ENCODE measurements at regions of chr22 and their contacts with region 1.

Region 1: DNA sequence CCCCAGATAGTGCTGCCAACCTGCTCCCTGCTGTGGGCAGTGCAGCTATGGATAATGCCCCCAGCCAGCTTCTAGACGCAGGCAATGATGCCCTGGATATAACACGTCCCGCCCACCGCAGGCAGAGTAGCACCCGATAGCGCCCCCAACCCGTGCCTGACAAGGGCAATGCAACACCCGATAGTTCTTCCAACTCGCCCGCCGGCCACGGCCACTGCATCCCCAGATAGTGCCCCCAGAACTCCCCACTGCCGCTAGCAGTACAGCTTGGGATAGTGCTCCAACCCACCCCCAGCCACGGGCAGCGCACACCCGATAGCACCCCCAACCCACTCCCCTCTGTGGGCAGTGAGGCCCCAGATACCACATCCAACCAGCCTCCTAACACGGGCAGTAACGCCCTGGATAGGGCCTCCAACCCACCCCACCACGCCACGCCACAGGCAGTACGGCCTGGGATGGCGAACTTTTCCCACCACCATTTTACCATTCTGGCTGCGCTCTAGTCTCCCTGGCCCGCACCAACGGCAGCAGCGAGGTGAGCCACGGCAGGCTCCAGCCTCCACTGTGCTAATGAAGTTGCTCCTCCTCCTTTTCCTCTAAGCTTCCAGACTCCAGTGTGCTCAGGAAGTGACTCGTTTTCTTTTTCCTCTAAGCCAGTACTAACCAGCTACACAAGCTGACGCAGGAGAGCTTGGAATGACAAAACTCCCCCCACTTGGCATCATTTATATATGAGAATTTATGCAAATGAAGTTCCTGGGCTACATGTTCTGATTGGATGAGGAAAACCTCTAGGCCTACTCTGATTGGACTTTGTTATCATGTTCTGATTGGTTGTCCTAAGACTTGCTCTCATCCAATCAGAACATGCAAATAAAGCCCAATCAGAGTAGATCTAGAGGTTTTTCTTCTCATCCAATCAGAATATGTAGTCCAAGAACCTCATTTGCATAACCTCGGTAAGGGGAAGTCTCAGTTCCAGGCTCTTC is 3.0 kb upstream of the RFPL3 start:
- DNase-seq: peak; percentile 90
- H3K4me3 ChIP-seq: peak overlapping the region; percentile 37 to 67 (median 50)
- H3K27ac ChIP-seq: peak overlapping the region; percentile 80
- H3K4me1 ChIP-seq: peaks cover 5% of the 10 kb centered on the region
- H3K27me3 ChIP-seq: no peaks in the 10 kb centered on the region
- CTCF ChIP-seq: peak in 1 of 2 donors; percentile 8
- POLR2A ChIP-seq: peak; percentile 77

Region 2: DNA sequence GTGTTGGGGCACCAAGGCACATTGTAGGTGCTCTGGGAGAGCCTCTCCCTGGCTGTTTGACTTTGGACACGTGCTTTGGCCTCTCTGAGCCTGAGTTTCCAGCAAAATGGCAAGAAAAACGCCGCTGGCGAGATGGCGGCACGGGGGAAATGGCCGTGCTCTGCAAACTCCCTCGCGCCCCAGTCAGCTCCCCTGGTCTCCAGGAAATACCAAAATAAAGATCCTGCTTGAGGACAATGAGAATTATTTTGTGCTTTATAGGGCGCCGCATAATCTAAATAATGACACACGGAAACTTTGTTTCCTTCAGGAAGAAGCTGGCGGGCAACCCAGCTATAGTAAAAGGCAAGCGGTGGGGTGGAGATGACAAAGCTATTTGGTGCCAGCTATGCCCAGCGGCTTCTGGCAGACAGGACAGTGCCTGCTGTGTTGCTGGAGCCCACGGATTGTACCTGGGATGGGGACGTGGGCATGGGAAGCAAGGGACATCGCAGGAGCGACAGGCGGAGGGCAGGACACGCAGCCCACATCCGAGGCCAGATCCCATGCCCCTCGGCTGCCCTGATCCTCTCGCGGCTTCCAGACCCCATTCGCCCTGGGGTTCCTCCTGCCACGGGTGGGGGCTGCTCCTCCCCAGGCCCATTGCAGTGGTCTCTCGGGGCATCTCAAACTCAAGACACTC is 23.3 kb before region 1 on chr22:
- CTCF ChIA-PET with region 1: interaction called, 3 read pairs
- POLR2A ChIA-PET with region 1: no interaction called
- dilution Hi-C with region 1: no loop called
- intact Hi-C with region 1: loop called (anchors 1 kb)
- DNase-seq: peak; percentile 83
- H3K4me3 ChIP-seq: no peak overlapping the region
- H3K27ac ChIP-seq: peak overlapping the region; percentile 96
- H3K4me1 ChIP-seq: peaks cover 25% of the 10 kb centered on the region
- H3K27me3 ChIP-seq: no peaks in the 10 kb centered on the region
- CTCF ChIP-seq: no peak
- POLR2A ChIP-seq: no peak

Region 3: GRCh38 chr22:32341122-32341740 is 13.4 kb before region 1 on chr22:
- CTCF ChIA-PET with region 1: interaction called, 4 read pairs
- POLR2A ChIA-PET with region 1: no interaction called
- dilution Hi-C with region 1: no loop called
- intact Hi-C with region 1: loop called (anchors 1 kb)
- DNase-seq: no peak
- H3K4me3 ChIP-seq: no peak overlapping the region
- H3K27ac ChIP-seq: no peak overlapping the region
- H3K4me1 ChIP-seq: peaks cover 26% of the 10 kb centered on the region
- H3K27me3 ChIP-seq: no peaks in the 10 kb centered on the region
- CTCF ChIP-seq: no peak
- POLR2A ChIP-seq: no peak

Measured in endothelial cell of umbilical vein (primary cell).